Testis (tissue), 5 donors: ENCODE measurements at regions of chr21 and their contacts with region 1.

Region 1: DNA sequence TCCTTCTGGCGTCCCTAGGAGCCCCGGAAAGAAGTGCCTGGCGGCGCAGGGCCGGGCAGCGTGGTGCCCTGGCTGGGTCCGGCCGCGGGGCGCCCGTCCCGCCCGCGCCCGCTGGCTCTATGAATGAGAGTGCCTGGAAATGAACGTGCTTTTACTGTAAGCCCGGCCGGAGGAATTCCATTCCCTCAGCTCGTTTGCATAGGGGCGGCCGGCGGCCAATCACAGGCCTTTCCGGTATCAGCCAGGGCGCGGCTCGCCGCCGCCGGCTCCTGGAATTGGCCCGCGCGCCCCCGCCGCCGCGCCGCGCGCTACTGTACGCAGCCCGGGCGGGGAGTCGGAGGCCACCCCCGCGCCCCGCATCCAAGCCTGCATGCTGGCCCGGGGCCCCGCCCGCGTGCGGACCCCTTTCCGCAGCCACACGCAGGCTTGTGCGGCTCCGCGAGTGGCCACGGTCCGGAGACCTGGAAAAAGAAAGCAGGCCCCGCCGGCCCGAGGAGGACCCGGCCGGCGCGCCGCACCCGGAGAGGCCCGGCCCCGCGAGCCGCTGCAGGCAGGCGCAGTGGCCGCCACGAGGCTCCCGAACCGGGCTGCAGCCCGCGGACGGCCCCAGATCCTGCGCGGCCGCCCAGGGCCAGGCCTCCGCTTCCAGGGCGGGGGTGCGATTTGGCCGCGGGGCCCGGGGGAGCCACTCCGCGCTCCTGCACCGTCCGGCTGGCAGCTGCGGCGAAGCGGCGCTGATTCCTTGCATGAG is 160.4 kb downstream of the RUNX1 start:
- DNase-seq: peak; percentile 98
- H3K4me3 ChIP-seq: peak overlapping the region; percentile 69 to 72
- H3K27ac ChIP-seq: peak overlapping the region; percentile 79 to 82
- H3K4me1 ChIP-seq: no peaks in the 10 kb centered on the region
- H3K27me3 ChIP-seq: no peaks in the 10 kb centered on the region
- CTCF ChIP-seq: no peak
- POLR2A ChIP-seq: peak; percentile 13

Region 2: DNA sequence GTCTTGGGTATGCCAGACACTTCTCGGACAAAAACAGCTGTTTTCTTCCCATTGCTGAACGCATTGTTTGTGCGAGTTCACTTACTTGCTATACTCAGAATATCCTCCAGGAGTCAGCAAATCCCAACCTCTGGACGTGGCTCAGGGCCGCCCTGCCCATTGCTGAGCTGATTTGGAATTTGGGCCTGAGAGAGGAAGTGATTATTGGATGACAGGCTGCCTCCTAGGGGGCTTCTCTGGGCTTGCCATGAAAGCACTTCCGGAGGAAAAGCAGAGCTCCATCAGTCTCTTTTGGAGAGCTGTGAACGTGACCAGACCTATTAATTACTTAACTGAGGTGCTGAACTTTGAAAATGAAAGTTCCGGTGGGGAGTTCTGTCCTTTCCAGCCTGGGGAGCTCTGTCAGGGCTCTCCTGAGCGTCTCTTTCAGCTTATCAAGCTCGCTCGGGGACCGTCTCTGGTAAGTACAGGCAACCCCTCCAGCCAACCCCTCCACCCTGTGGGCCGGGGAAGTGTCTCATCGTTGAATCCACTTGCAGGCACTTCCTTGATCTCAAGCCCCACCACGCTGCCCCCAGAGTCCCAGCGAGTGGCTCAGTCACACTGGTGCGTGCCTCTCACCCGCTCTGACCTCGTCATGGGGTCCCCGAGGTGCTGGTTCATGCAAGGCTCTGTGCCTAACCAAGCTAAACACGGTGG is 143.0 kb before region 1 on chr21:
- intact Hi-C with region 1: loop called (anchors 10 kb)
- DNase-seq: peak; percentile 73
- H3K4me3 ChIP-seq: no peak overlapping the region
- H3K27ac ChIP-seq: no peak overlapping the region
- H3K4me1 ChIP-seq: no peaks in the 10 kb centered on the region
- H3K27me3 ChIP-seq: no peaks in the 10 kb centered on the region
- CTCF ChIP-seq: peak; percentile 74 to 85 (median 76)
- POLR2A ChIP-seq: no peak